Mammary epithelial cell (primary cell): ENCODE measurements at regions of chr22 and their contacts with region 1.

Region 1: DNA sequence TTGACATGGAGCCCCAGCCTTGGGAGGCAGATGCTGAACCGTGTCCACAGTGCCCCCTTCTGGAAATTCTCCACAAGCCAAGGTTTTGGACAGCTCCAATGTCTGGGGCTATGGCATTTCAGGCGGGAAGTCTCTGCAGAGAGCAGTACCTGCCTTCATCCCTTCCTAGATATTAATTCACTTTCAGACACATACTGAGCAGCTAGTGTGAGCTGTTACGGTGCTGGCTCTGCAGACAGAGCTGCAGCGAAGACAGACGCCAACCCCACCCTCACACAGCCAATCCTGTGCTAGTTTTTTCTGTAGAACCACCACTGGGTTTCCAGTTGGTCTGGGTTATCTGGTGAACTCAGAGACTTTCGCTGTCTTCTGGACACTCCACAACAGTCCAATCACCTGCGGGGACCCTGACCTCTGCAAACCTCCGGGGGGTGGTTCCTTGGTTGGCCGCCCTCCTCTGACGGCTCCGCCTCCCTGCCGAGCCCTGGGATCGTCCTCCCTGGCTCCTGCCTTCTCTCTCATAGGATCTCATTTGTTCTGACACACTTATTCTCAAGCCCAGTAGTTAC is 9.1 kb downstream of the LMF2 start:
- DNase-seq: peak; percentile 66
- H3K4me3 ChIP-seq: no peak overlapping the region
- H3K27ac ChIP-seq: no peak overlapping the region
- H3K4me1 ChIP-seq: no peaks in the 10 kb centered on the region
- H3K27me3 ChIP-seq: no peaks in the 10 kb centered on the region
- CTCF ChIP-seq: peak; percentile 81

Region 2: GRCh38 chr22:50209893-50210292 is 288.5 kb before region 1 on chr22:
- CTCF ChIA-PET with region 1: no interaction called
- dilution Hi-C with region 1: no loop called
- in situ Hi-C with region 1: no loop called
- intact Hi-C with region 1: no loop called
- DNase-seq: peak; percentile 37
- H3K4me3 ChIP-seq: no peak overlapping the region
- H3K27ac ChIP-seq: no peak overlapping the region
- H3K4me1 ChIP-seq: no peaks in the 10 kb centered on the region
- H3K27me3 ChIP-seq: no peaks in the 10 kb centered on the region
- CTCF ChIP-seq: peak; percentile 83 to 93

Region 3: GRCh38 chr22:50244420-50245213 is 253.8 kb before region 1 on chr22 and contains the start of gene TUBGCP6:
- CTCF ChIA-PET with region 1: no interaction called
- dilution Hi-C with region 1: no loop called
- in situ Hi-C with region 1: no loop called
- intact Hi-C with region 1: loop called (anchors 1 kb)
- DNase-seq: peak; percentile 91
- H3K4me3 ChIP-seq: peak within 1 kb of the TSS; percentile 67 to 81 (median 69)
- H3K27ac ChIP-seq: peak within 1 kb of the TSS; percentile 69
- H3K4me1 ChIP-seq: peaks cover 23% of the 10 kb centered on the region
- H3K27me3 ChIP-seq: no peaks in the 10 kb centered on the region
- CTCF ChIP-seq: peak in 1 of 2 donors; percentile 28
- total RNA-seq, gene TUBGCP6: 33.0 to 34.0 TPM

Region 4: GRCh38 chr22:50399751-50400331 is 98.6 kb before region 1 on chr22:
- CTCF ChIA-PET with region 1: no interaction called
- dilution Hi-C with region 1: no loop called
- in situ Hi-C with region 1: no loop called
- intact Hi-C with region 1: loop called (anchors 1 kb)
- DNase-seq: no peak
- H3K4me3 ChIP-seq: no peak overlapping the region
- H3K27ac ChIP-seq: no peak overlapping the region
- H3K4me1 ChIP-seq: no peaks in the 10 kb centered on the region
- H3K27me3 ChIP-seq: no peaks in the 10 kb centered on the region
- CTCF ChIP-seq: peak; percentile 21 to 52

Region 5: GRCh38 chr22:50444663-50445062 is 53.7 kb before region 1 on chr22:
- CTCF ChIA-PET with region 1: no interaction called
- dilution Hi-C with region 1: no loop called
- in situ Hi-C with region 1: no loop called
- intact Hi-C with region 1: loop called (anchors 5 kb)
- DNase-seq: peak; percentile 21
- H3K4me3 ChIP-seq: no peak overlapping the region
- H3K27ac ChIP-seq: no peak overlapping the region
- H3K4me1 ChIP-seq: peaks cover 10% of the 10 kb centered on the region
- H3K27me3 ChIP-seq: no peaks in the 10 kb centered on the region
- CTCF ChIP-seq: no peak

Region 6: GRCh38 chr22:50456466-50457234 is 41.8 kb before region 1 on chr22:
- CTCF ChIA-PET with region 1: no interaction called
- dilution Hi-C with region 1: no loop called
- in situ Hi-C with region 1: no loop called
- intact Hi-C with region 1: loop called (anchors 5 kb)
- DNase-seq: no peak
- H3K4me3 ChIP-seq: no peak overlapping the region
- H3K27ac ChIP-seq: no peak overlapping the region
- H3K4me1 ChIP-seq: no peaks in the 10 kb centered on the region
- H3K27me3 ChIP-seq: no peaks in the 10 kb centered on the region
- CTCF ChIP-seq: peak in 1 of 2 donors; percentile 25